HCT116 (cell line): ENCODE measurements at regions of chr1 and their contacts with region 1.

Region 1: DNA sequence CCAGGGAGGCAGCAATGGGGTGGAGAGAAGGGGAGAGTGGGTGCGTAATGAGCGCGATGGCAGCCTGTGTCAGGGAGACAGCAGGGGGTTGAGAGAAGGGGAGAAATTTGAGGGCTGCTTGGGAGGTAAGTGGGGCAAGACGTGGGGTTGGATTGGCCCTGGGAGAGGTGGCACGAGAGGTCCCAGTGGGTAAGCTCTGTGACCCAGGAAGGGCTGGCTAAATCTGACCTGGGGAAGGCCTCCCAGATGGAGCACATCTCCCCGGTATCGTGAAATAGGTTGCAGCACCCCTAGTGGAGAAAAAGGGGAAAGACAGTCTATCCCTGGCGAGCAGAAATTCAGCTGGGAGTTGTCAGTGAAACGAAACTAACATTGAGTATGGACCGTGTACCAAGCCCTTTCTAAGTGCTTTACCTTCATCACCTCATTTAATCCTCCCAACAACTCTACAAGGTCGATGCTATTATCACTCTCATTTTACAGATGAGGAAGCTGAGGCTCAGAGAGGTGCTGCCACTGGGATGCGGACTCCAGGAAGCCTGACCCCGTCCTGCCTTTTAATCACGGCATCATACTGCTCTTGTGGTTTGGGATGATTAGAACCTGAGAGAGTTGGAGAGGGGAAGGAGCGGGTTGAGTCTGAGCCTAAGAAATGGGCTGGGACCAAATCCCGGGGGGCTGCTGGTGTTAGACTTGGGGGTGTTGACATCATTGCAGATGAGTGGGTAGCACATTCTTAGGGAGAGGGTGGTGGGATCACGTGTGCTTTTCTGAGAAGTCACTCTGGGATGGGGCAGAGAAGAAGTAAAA is 56.6 kb upstream of the RPL11 start:
- DNase-seq: peak; percentile 56
- ATAC-seq: peak; percentile 74
- H3K4me3 ChIP-seq: peak overlapping the region; percentile 54 to 81
- H3K27ac ChIP-seq: peak overlapping the region; percentile 19; the same call in 1 of the 2 replicates
- H3K4me1 ChIP-seq: peaks cover 13 to 25% of the 10 kb centered on the region in 2 experiments
- H3K27me3 ChIP-seq: no peaks in the 10 kb centered on the region
- CTCF ChIP-seq: peak; percentile 55 to 90 (median 82); a peak in 5 of 6 replicates
- POLR2A ChIP-seq: no peak
- RAD21 ChIP-seq: peak; percentile 77

Region 2: DNA sequence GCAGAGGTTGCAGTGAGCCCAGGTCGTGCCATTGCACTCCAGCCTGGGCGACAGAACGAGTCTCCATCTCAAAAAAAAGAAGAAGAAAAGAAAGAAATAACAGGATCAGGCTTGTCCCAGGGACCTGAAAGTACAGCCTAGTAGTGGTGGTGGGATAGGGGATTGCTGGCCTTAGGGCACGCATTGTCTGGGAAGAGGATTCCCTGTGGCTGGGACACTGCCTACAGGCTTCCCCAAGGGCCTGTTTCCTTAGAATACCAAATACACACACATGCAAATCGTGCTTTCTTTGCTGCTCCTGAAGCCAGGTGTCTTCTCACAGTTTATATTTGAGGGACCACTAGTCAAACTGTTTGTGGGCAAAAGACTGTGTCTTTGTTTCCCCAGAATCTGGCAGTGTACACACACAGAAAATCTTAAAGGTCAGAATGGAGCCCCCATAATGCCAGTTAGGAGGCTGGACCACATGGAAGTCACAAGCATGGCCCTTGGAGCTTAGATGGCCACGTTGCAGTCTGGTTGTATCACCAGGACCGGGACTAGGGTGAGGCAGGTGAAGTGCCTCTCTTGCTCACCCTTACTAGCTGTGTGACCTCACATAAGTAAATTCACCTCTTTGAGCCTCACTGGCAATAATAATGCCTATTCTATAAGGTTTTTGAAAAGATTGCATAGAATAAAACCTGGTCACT is 138.4 kb before region 1 on chr1:
- CTCF ChIA-PET with region 1: interaction called, 17 read pairs
- POLR2A ChIA-PET with region 1: interaction called, 3 read pairs
- RAD21 ChIA-PET with region 1: interaction called, 3 to 4 read pairs
- intact Hi-C with region 1: no loop called
- DNase-seq: no peak
- ATAC-seq: peak; percentile 49
- H3K4me3 ChIP-seq: no peak overlapping the region
- H3K27ac ChIP-seq: 0 out of 2 replicates have a peak overlapping the region, but pooled peaks have one; percentile 10
- H3K4me1 ChIP-seq: peaks cover 0 to 3% of the 10 kb centered on the region in 2 experiments; a peak in 1 of 4 replicates
- H3K27me3 ChIP-seq: no peaks in the 10 kb centered on the region
- CTCF ChIP-seq: no peak
- POLR2A ChIP-seq: no peak
- RAD21 ChIP-seq: no peak

Region 3: DNA sequence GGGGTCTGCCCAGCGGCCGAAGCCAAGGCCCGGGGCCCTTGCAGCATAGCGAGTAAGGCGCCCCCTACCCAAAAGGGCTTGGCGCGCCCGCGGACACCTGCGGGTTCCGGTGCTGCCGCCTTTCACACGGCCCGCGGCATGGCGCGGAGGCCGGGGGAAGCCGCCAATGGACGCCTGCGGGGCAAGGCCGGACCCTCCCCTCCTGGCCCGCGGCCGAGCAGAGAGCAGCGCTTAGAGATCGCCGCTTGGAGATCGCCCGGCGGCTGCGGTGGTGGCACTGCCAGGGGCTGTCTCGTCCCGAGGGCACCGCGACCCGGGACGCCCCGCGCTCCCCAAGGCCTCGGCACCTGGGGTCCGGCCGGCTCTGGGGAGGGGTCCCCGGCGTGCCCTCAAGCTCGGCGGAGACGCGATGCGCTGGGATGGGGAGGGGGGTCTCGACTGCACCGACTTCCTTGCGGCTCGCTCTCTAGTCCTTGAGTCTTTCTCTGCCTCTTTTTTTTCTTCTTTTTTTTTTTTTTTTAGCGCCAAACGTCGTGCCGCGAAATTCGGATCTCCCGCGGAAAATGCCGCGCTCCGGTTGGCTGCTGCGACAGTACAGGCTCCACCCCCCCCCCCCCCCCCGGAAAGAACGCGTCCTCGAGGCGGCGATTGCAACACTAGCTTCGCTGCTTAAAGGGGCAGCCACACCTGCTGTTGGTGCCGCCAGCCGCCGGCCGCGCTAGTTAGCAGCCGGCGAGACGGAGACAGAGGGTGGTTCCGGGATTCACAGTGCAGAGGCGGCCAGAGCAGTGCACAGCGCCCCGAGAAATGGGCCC is 104.1 kb before region 1 on chr1 and contains the start of gene E2F2:
- CTCF ChIA-PET with region 1: interaction called, 10 read pairs
- POLR2A ChIA-PET with region 1: interaction called, 3 read pairs
- RAD21 ChIA-PET with region 1: interaction called, 3 read pairs
- intact Hi-C with region 1: no loop called
- DNase-seq: peak; percentile 81
- ATAC-seq: peak; percentile 54
- H3K4me3 ChIP-seq: peak within 1 kb of the TSS; percentile 69 to 84
- H3K27ac ChIP-seq: peak within 1 kb of the TSS; percentile 80
- H3K4me1 ChIP-seq: peaks cover 59 to 96% of the 10 kb centered on the region in 2 experiments
- H3K27me3 ChIP-seq: no peaks in the 10 kb centered on the region
- CTCF ChIP-seq: peak in 2 of 3 experiments; percentile 3 to 19; a peak in 1 of 6 replicates
- POLR2A ChIP-seq: peak; percentile 38
- RAD21 ChIP-seq: no peak
- total RNA-seq, gene E2F2: 16.3 TPM

Region 4: GRCh38 chr1:23548704-23549143 is 86.3 kb before region 1 on chr1:
- CTCF ChIA-PET with region 1: interaction called, 104 read pairs
- POLR2A ChIA-PET with region 1: interaction called, 14 read pairs
- RAD21 ChIA-PET with region 1: interaction called, 23 to 25 read pairs
- intact Hi-C with region 1: loop called (anchors 1 kb)
- DNase-seq: no peak
- ATAC-seq: no peak
- H3K4me3 ChIP-seq: no peak overlapping the region
- H3K27ac ChIP-seq: no peak overlapping the region
- H3K4me1 ChIP-seq: peaks cover 19 to 32% of the 10 kb centered on the region in 2 experiments
- H3K27me3 ChIP-seq: no peaks in the 10 kb centered on the region
- CTCF ChIP-seq: no peak
- POLR2A ChIP-seq: no peak
- RAD21 ChIP-seq: no peak

Region 5: DNA sequence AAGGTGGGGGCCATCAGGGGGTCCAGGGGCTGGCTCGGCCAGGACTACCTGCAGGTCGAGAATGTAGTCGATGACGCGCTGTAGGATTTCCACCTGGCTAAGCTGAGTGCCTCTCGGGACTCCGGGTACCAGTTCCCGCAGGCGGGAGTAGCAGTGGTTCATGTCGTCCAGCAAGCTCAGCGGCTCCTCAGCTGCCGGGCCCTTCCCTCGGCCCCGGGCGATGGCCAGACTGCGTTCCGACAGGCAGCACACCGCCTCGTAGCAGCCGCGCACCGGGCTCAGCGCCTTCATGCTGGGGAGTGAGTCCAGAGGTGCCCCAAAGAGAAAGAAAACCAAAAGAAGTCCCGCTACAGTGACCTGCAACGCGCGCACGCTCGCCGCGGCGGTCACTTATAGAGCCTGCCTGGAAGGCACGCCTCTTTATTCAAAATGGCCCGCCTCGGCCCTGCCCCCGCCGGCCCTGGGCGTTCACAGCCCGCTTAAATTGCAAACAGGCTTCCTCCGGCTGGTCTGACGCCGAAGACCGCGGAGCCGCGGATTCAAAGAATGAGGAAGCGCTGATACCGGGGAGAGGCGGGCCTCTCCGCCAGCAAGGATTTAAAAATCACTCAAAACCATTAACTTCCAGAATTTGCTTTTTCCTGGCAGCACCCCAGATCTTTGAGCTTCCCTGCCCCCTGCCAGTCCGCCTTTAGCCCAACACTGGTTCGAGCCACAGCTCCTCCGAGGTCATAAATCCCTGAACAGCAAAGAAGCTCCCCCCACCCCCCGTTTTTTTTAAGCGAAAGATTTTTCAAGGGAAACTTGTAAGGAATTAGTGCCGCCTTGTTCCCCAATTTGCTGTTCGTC is 75.7 kb before region 1 on chr1 and contains the start of gene ID3:
- CTCF ChIA-PET with region 1: interaction called, 34 read pairs
- POLR2A ChIA-PET with region 1: interaction called, 14 read pairs
- RAD21 ChIA-PET with region 1: interaction called, 10 to 13 read pairs
- intact Hi-C with region 1: loop called (anchors 2 kb)
- DNase-seq: peak; percentile 86
- ATAC-seq: peak; percentile 58
- H3K4me3 ChIP-seq: peak within 1 kb of the TSS; percentile 79 to 95
- H3K27ac ChIP-seq: peak within 1 kb of the TSS; percentile 89
- H3K4me1 ChIP-seq: peaks cover 69 to 90% of the 10 kb centered on the region in 2 experiments
- H3K27me3 ChIP-seq: no peaks in the 10 kb centered on the region
- CTCF ChIP-seq: no peak
- POLR2A ChIP-seq: peak; percentile 99
- RAD21 ChIP-seq: no peak
- total RNA-seq, gene ID3: 183 TPM

Region 6: DNA sequence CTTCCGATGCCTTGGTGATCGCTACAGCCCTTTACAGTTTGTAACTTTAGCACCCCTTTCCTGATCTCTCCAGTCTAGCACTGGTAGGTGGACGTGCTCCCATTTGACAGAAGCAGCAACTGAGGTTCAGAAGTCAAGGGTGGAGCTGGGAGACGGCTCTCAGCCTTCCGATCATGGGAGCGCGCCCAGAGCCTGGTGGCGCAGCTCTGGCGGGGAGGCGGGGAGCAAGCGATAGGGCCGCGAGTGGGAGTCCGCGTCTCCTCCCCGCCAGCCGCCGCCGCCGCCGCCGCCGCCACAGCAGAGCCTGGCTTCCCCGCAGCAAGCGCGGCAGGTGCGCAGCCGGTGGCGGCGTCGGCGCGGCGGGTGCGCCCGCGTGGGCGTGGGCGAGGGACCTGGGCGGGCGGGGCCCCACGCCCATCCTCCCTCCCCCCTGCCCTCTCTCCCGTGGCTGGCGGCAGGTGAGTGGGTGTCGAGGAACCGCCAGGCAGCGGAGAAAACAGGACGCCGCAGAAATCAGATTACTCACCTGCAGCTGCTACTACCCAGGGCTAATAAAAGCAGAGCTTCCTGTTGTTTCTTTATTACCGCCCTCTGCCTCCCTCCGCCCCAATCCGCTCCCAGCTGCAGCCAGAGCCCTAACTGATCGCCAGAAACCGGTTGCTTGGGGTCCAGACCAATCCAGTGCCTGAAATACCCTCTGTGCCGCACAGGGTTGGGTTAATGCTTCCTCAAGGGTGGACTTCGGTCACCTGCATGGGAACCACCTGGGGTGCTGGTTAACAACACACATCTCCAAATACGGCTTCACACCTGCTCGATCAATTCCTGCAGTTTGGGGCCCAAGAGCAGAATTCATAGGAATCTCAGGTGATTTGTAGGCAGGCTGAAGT is 15.5 kb before region 1 on chr1:
- CTCF ChIA-PET with region 1: interaction called, 17 read pairs
- POLR2A ChIA-PET with region 1: no interaction called
- RAD21 ChIA-PET with region 1: interaction called in 1 of 2 experiments, 3 read pairs
- intact Hi-C with region 1: no loop called
- DNase-seq: no peak
- ATAC-seq: peak; percentile 81
- H3K4me3 ChIP-seq: peak overlapping the region; percentile 35 to 54
- H3K27ac ChIP-seq: no peak overlapping the region; the same call in 1 of the 2 replicates
- H3K4me1 ChIP-seq: peaks cover 11 to 24% of the 10 kb centered on the region in 2 experiments
- H3K27me3 ChIP-seq: no peaks in the 10 kb centered on the region
- CTCF ChIP-seq: no peak
- POLR2A ChIP-seq: no peak
- RAD21 ChIP-seq: no peak

Region 7: GRCh38 chr1:23657659-23658275 is 22.7 kb after region 1 on chr1:
- CTCF ChIA-PET with region 1: interaction called, 12 read pairs
- POLR2A ChIA-PET with region 1: no interaction called
- RAD21 ChIA-PET with region 1: no interaction called
- intact Hi-C with region 1: no loop called
- DNase-seq: peak; percentile 60
- ATAC-seq: peak; percentile 98
- H3K4me3 ChIP-seq: no peak overlapping the region
- H3K27ac ChIP-seq: no peak overlapping the region
- H3K4me1 ChIP-seq: peaks cover 0 to 12% of the 10 kb centered on the region in 2 experiments; a peak in 2 of 4 replicates
- H3K27me3 ChIP-seq: no peaks in the 10 kb centered on the region
- CTCF ChIP-seq: peak; percentile 57 to 100 (median 98); a peak in 5 of 6 replicates
- POLR2A ChIP-seq: no peak
- RAD21 ChIP-seq: peak; percentile 53